ENCODE measurements at regions of chr2 and their contacts with region 1.

Region 1: DNA sequence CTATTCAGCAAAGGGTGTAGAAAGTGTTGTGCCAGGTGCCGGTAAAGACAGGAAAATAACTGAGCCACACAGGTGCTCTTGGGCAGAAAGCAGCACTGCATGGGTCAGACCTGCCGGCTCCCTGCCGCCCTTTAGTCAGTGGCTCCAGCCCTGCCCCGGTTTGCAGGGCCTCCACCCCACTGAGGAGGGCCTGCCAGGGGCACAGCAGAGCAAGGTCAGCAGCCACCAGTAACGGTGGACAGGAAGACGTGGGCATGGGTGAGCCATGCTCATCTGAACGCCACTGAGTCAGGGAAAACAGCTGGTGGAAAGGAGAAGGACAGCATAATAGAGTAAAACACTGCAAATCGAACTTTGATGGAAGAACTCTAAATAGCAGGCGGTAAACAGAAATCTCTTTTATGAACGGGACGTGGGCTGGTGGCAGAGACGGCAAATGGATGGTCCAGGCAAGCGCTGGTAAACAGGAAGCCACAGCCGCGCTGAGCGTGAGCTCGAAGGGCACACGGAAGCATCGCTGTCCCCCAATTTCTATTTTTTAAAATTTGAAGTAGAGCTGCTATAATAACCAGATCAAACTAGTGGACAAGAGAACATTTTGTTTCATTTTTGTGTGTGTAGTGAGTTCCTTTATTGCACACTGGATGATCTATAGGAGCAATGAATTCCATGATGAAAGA is 141.8 kb upstream of the ALKAL2 start:
- DNase-seq: no peak
- H3K4me3 Mint-ChIP-seq: peak overlapping the region; percentile 49
- H3K27ac Mint-ChIP-seq: peak overlapping the region; percentile 55
- H3K4me1 Mint-ChIP-seq: peaks cover 32% of the 10 kb centered on the region
- H3K27me3 Mint-ChIP-seq: peaks cover 4% of the 10 kb centered on the region

Region 2: GRCh38 chr2:393711-394696 is 35.7 kb before region 1 on chr2:
- intact Hi-C with region 1: loop called (anchors 5 kb)
- DNase-seq: peak; percentile 68
- H3K4me3 Mint-ChIP-seq: peak overlapping the region; percentile 73
- H3K27ac Mint-ChIP-seq: peak overlapping the region; percentile 76
- H3K4me1 Mint-ChIP-seq: peaks cover 11% of the 10 kb centered on the region
- H3K27me3 Mint-ChIP-seq: peaks cover 3% of the 10 kb centered on the region

Region 3: GRCh38 chr2:575030-575726 is 145.5 kb after region 1 on chr2:
- intact Hi-C with region 1: no loop called
- DNase-seq: no peak
- H3K4me3 Mint-ChIP-seq: no peak overlapping the region
- H3K27ac Mint-ChIP-seq: no peak overlapping the region
- H3K4me1 Mint-ChIP-seq: no peaks in the 10 kb centered on the region
- H3K27me3 Mint-ChIP-seq: peaks cover 13% of the 10 kb centered on the region

Region 4: DNA sequence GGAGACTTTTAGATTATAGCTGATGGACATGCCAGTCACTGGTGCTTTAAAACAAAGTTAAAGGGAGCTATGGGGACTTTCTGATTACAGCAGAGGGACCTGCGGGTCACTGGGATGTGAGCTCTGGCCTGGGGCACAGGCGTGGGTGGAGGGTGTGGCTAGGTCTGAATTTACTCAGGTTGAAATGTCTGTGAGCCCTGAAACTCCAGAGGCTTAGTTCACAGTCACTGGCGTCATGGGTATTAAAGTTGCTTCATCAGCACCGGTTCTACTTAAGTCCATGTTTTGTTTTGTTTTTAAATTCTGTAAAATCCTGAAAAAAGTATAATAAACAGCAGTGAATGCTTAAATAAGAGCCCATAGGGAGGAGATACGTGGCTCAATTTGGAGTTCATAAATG is 296.5 kb after region 1 on chr2:
- intact Hi-C with region 1: no loop called
- DNase-seq: no peak
- H3K4me3 Mint-ChIP-seq: no peak overlapping the region
- H3K27ac Mint-ChIP-seq: no peak overlapping the region
- H3K4me1 Mint-ChIP-seq: no peaks in the 10 kb centered on the region
- H3K27me3 Mint-ChIP-seq: peaks cover 3% of the 10 kb centered on the region

Measured in activated T-helper 1 cell treated with anti-CD3 and anti-CD28 coated beads, Interleukin-12 subunit alpha, Interleukin-12 subunit beta, Interleukin-2, Interleukin-4 antibody, amounts not matched to agents 30 ng/mL and 10 ng/mL and 1 ng/mL, durations not matched to agents 14 hours and 24 hours and 36 hours (primary cell).